ENCODE measurements at regions of chr3 and their contacts with region 1.

Region 1: DNA sequence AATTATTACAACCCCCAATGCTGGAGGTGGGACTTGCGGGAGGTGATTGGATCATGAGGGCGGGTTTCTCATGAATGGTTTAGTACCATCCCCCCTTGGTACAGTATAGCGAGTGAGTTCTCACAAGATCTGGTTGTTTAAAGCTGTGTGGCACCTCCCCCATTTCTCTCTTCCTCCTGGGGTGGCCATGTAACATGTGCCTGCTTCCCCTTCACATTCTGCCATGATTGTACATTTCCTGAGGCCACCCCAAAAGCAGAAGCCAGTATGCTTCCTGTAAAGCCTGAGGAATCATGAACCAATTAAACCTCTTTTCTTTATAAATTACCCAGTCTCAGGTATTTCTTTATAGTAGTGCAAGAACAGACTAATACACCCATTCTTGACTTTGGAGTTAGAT is 20.3 kb upstream of the PROK2 start:
- DNase-seq: no peak
- H3K4me3 ChIP-seq: no peak overlapping the region
- H3K27ac ChIP-seq: no peak overlapping the region
- H3K4me1 ChIP-seq: no peaks in the 10 kb centered on the region
- H3K27me3 ChIP-seq: peaks cover 0 to 3% of the 10 kb centered on the region in 2 donors
- CTCF ChIP-seq: no peak
- POLR2A ChIP-seq: no peak

Region 2: DNA sequence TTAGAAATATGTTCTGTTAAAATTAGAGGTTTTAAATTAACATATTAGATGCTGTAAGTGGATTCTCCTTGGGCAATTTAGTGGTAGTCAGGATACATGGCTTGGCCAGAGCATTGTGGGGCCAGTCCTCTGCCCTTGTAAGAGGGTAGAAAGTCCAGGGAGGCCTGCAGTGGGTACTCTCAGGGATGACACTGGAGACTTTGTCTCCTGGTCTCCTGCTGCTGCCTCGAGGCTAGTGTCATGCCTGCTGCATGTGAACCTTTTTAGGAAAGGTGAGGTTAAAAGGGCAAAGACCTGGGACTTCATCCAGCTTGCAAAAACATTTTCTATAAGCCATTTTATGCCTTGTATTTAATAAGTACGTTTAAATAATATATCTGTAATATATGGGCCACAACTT is 76.5 kb after region 1 on chr3:
- intact Hi-C with region 1: loop called (anchors 2 kb)
- DNase-seq: no peak
- H3K4me3 ChIP-seq: no peak overlapping the region
- H3K27ac ChIP-seq: no peak overlapping the region
- H3K4me1 ChIP-seq: no peaks in the 10 kb centered on the region
- H3K27me3 ChIP-seq: no peaks in the 10 kb centered on the region
- CTCF ChIP-seq: no peak
- POLR2A ChIP-seq: no peak

Region 3: DNA sequence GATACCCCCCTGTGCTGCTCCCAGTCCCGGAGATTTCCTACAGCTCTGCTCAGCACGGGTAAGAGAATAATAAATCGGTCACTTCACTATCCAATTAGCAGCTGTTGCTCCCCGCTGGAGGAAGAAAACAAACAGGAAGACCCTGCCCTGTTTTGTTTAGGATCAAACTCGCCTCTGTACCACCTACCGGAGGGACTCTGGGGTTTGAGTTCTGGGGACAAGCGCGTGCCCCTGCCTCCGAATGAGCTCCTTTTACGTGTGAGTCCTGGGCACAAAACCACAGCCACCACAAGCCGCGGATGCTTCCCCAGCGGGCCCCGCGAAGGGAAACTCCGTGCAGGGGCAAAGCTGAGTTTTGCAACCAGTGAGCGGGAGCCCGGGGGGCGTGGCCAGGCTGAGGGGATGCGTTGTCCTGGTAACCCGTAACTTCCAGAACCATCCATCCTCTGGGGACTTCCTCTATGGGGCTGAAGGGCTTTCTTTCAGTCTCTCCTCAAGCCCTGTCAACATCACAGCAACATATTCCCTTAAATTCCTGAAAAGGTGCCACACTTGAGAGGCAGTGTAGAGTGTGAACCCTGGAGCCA is 295.5 kb after region 1 on chr3:
- intact Hi-C with region 1: no loop called
- DNase-seq: peak in 1 of 2 donors; percentile 33
- H3K4me3 ChIP-seq: peak overlapping the region; percentile 20 to 55 (median 23)
- H3K27ac ChIP-seq: no peak overlapping the region
- H3K4me1 ChIP-seq: peaks cover 0 to 4% of the 10 kb centered on the region in 2 donors
- H3K27me3 ChIP-seq: no peaks in the 10 kb centered on the region
- CTCF ChIP-seq: no peak
- POLR2A ChIP-seq: no peak

Measured in breast epithelium (tissue), 4 donors.